Tibial artery (tissue), 4 donors: ENCODE measurements at regions of chr12 and their contacts with region 1.

Region 1: GRCh38 chr12:131608740-131609690 is 101.9 kb upstream of the SFSWAP start:
- DNase-seq: peak; percentile 66 to 76
- H3K4me3 ChIP-seq: peak overlapping the region in 1 of 2 donors; percentile 6
- H3K27ac ChIP-seq: no peak overlapping the region
- H3K4me1 ChIP-seq: peaks cover 0 to 9% (median 2%) of the 10 kb centered on the region in 4 donors
- H3K27me3 ChIP-seq: peaks cover 0 to 48% of the 10 kb centered on the region in 2 donors
- CTCF ChIP-seq: peak; percentile 71 to 80

Region 2: DNA sequence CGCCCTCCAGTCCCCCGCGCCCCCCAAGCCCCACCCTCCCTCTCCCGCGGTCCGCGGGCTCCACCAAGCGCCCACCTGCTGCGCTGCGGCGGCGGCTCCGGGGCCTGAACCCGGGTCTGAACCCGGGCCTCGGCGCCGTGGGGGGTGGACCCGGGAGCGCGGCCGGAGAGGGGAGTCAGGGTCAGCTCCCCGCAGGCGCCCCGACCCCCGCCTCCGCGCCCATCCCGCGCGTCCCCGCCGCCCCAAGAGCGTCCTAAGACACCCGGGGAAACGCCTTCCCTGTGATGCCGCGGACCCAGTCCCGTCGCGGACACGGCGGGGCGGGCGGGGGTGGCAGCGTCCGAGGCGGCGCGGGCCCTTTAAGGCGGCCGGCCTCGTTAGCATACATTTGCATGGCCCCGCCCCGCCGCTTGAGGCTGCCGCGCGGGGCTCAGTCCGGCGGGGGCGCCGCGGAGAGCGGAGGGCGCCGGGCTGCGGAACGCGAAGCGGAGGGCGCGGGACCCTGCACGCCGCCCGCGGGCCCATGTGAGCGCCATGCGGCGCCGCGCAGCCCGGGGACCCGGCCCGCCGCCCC is 219.0 kb after region 1 on chr12 and contains the start of gene MMP17:
- intact Hi-C with region 1: loop called (anchors 10 kb)
- DNase-seq: no peak
- H3K4me3 ChIP-seq: peak within 1 kb of the TSS; percentile 44 to 49
- H3K27ac ChIP-seq: no peak within 1 kb of the TSS
- H3K4me1 ChIP-seq: peaks cover 0 to 56% (median 40%) of the 10 kb centered on the region in 4 donors
- H3K27me3 ChIP-seq: peaks cover 0 to 67% of the 10 kb centered on the region in 2 donors
- CTCF ChIP-seq: no peak